Activated CD4-positive, alpha-beta memory T cell treated with anti-CD3 and anti-CD28 coated beads for 36 hours (primary cell): ENCODE measurements at regions of chr5 and their contacts with region 1.

Region 1: DNA sequence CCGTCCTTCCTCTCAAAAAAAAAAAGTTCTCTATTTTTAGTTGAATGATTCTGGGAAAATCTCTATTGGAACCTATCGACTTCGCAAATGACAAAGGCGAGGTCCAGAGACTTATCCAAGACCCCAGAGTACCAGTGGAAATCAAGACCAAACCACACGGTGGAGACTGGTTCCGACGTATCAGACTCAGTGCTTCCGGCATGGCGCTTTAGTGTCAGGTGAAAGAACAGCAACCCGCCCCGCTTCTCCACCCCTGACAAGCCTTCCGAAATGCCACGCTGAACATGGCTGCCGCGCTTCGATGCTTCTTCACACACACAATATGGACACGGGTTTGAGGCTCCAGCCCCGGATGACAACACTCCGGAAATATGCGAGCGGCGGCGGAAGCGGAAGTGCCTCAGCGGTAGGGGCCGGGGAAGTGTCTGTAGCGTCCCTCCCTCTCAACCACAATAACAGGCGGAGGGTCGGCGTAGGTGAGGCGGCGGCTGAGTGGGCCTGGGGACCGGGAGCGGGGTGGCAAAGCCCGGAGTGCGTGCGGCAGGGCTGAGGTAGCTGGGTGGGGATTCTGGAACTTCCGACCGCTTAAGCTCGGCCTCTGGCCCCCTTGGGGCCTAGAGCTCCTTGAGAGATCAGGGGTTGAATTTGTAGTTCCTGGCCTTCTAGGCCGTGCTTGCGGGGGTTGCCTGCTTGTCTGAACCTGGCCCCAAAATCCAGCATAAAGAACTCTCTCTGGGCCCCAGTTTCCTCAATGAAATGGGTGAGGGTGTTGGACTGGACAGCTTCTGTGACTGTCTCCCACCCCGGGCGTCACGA is at the start of gene FBXO38:
- DNase-seq: peak; percentile 98
- H3K4me3 Mint-ChIP-seq: peak within 1 kb of the TSS; percentile 86
- H3K27ac Mint-ChIP-seq: peak within 1 kb of the TSS; percentile 92
- H3K4me1 Mint-ChIP-seq: peaks cover 53% of the 10 kb centered on the region
- H3K27me3 Mint-ChIP-seq: no peaks in the 10 kb centered on the region
- total RNA-seq, gene FBXO38: 43.1 to 45.0 TPM

Region 2: GRCh38 chr5:148179234-148179824 is 204.4 kb before region 1 on chr5:
- CTCF ChIA-PET with region 1: interaction called, 4 read pairs
- POLR2A ChIA-PET with region 1: no interaction called
- intact Hi-C with region 1: loop called (anchors 2 kb)
- DNase-seq: no peak
- H3K4me3 Mint-ChIP-seq: no peak overlapping the region
- H3K27ac Mint-ChIP-seq: no peak overlapping the region
- H3K4me1 Mint-ChIP-seq: no peaks in the 10 kb centered on the region
- H3K27me3 Mint-ChIP-seq: peaks cover 7% of the 10 kb centered on the region

Region 3: GRCh38 chr5:148364343-148364742 is 19.4 kb before region 1 on chr5:
- CTCF ChIA-PET with region 1: no interaction called
- POLR2A ChIA-PET with region 1: no interaction called
- intact Hi-C with region 1: no loop called
- DNase-seq: no peak
- H3K4me3 Mint-ChIP-seq: no peak overlapping the region
- H3K27ac Mint-ChIP-seq: no peak overlapping the region
- H3K4me1 Mint-ChIP-seq: no peaks in the 10 kb centered on the region
- H3K27me3 Mint-ChIP-seq: no peaks in the 10 kb centered on the region

Region 4: GRCh38 chr5:148401604-148402003 is 17.8 kb after region 1 on chr5:
- CTCF ChIA-PET with region 1: interaction called, 3 read pairs
- POLR2A ChIA-PET with region 1: interaction called, 4 read pairs
- intact Hi-C with region 1: loop called (anchors 1 kb)
- DNase-seq: no peak
- H3K4me3 Mint-ChIP-seq: no peak overlapping the region
- H3K27ac Mint-ChIP-seq: peak overlapping the region; percentile 80
- H3K4me1 Mint-ChIP-seq: peaks cover 48% of the 10 kb centered on the region
- H3K27me3 Mint-ChIP-seq: no peaks in the 10 kb centered on the region

Region 5: GRCh38 chr5:148708854-148709253 is 325.1 kb after region 1 on chr5:
- CTCF ChIA-PET with region 1: no interaction called
- POLR2A ChIA-PET with region 1: no interaction called
- intact Hi-C with region 1: loop called (anchors 2 kb)
- DNase-seq: peak; percentile 48
- H3K4me3 Mint-ChIP-seq: no peak overlapping the region
- H3K27ac Mint-ChIP-seq: no peak overlapping the region
- H3K4me1 Mint-ChIP-seq: peaks cover 15% of the 10 kb centered on the region
- H3K27me3 Mint-ChIP-seq: peaks cover 25% of the 10 kb centered on the region

Region 6: GRCh38 chr5:148805326-148806290 is 421.8 kb after region 1 on chr5:
- CTCF ChIA-PET with region 1: no interaction called
- POLR2A ChIA-PET with region 1: no interaction called
- intact Hi-C with region 1: loop called (anchors 1 kb)
- DNase-seq: peak; percentile 70
- H3K4me3 Mint-ChIP-seq: no peak overlapping the region
- H3K27ac Mint-ChIP-seq: peak overlapping the region; percentile 16
- H3K4me1 Mint-ChIP-seq: peaks cover 62% of the 10 kb centered on the region
- H3K27me3 Mint-ChIP-seq: peaks cover 15% of the 10 kb centered on the region